ENCODE measurements at regions of chr9 and their contacts with region 1.

Region 1: GRCh38 chr9:19809401-19810269 is 20.8 kb upstream of the SLC24A2 start:
- DNase-seq: no peak
- H3K4me3 ChIP-seq: no peak overlapping the region
- H3K27ac ChIP-seq: no peak overlapping the region
- H3K4me1 ChIP-seq: no peaks in the 10 kb centered on the region
- H3K27me3 ChIP-seq: no peaks in the 10 kb centered on the region
- CTCF ChIP-seq: no peak

Region 2: GRCh38 chr9:19754921-19755320 is 54.7 kb before region 1 on chr9:
- CTCF ChIA-PET with region 1: no interaction called
- dilution Hi-C with region 1: loop called (anchors 5 kb)
- in situ Hi-C with region 1: no loop called
- intact Hi-C with region 1: no loop called
- DNase-seq: no peak
- H3K4me3 ChIP-seq: no peak overlapping the region
- H3K27ac ChIP-seq: no peak overlapping the region
- H3K4me1 ChIP-seq: no peaks in the 10 kb centered on the region
- H3K27me3 ChIP-seq: no peaks in the 10 kb centered on the region
- CTCF ChIP-seq: no peak